CD8-positive, alpha-beta memory T cell (primary cell): ENCODE measurements at regions of chr11 and their contacts with region 1.

Region 1: DNA sequence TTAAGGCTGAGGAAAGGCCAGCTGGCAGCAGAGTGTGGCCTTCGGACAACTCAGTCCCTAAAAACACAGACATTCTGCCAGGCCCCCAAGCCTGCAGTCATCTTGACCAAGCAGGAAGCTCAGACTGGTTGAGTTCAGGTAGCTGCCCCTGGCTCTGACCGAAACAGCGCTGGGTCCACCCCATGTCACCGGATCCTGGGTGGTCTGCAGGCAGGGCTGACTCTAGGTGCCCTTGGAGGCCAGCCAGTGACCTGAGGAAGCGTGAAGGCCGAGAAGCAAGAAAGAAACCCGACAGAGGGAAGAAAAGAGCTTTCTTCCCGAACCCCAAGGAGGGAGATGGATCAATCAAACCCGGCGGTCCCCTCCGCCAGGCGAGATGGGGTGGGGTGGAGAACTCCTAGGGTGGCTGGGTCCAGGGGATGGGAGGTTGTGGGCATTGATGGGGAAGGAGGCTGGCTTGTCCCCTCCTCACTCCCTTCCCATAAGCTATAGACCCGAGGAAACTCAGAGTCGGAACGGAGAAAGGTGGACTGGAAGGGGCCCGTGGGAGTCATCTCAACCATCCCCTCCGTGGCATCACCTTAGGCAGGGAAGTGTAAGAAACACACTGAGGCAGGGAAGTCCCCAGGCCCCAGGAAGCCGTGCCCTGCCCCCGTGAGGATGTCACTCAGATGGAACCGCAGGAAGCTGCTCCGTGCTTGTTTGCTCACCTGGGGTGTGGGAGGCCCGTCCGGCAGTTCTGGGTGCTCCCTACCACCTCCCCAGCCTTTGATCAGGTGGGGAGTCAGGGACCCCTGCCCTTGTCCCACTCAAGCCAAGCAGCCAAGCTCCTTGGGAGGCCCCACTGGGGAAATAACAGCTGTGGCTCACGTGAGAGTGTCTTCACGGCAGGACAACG is 11.7 kb downstream of the CXCR5 start:
- DNase-seq: peak; percentile 55 to 86 (median 75)
- H3K4me3 ChIP-seq: peak overlapping the region; percentile 53
- H3K4me3 Mint-ChIP-seq: peak overlapping the region; percentile 40 to 83 (median 75)
- H3K27ac ChIP-seq: peak overlapping the region; percentile 54
- H3K27ac Mint-ChIP-seq: peak overlapping the region; percentile 84 to 97 (median 90)
- H3K4me1 ChIP-seq: peaks cover 73% of the 10 kb centered on the region
- H3K4me1 Mint-ChIP-seq: peaks cover 64 to 85% (median 72%) of the 10 kb centered on the region in 3 donors
- H3K27me3 ChIP-seq: no peaks in the 10 kb centered on the region
- H3K27me3 Mint-ChIP-seq: peaks cover 0 to 5% of the 10 kb centered on the region in 2 donors

Region 2: GRCh38 chr11:118785362-118785761 is 110.0 kb before region 1 on chr11:
- CTCF ChIA-PET with region 1: interaction called, 42 read pairs
- POLR2A ChIA-PET with region 1: interaction called, 59 read pairs
- DNase-seq: no peak
- H3K4me3 ChIP-seq: peak overlapping the region; percentile 46
- H3K4me3 Mint-ChIP-seq: peak overlapping the region; percentile 51 to 100 (median 79)
- H3K27ac ChIP-seq: no peak overlapping the region
- H3K27ac Mint-ChIP-seq: peak overlapping the region in 7 of 8 donors; percentile 3 to 99 (median 73)
- H3K4me1 ChIP-seq: peaks cover 70% of the 10 kb centered on the region
- H3K4me1 Mint-ChIP-seq: peaks cover 53 to 75% (median 65%) of the 10 kb centered on the region in 3 donors
- H3K27me3 ChIP-seq: no peaks in the 10 kb centered on the region
- H3K27me3 Mint-ChIP-seq: no peaks in the 10 kb centered on the region

Region 3: GRCh38 chr11:118870396-118871345 is 24.7 kb before region 1 on chr11:
- CTCF ChIA-PET with region 1: interaction called, 16 read pairs
- POLR2A ChIA-PET with region 1: interaction called, 21 read pairs
- DNase-seq: peak in 1 of 5 donors; percentile 58
- H3K4me3 ChIP-seq: peak overlapping the region; percentile 35
- H3K4me3 Mint-ChIP-seq: peak overlapping the region; percentile 72 to 92 (median 83)
- H3K27ac ChIP-seq: peak overlapping the region; percentile 87
- H3K27ac Mint-ChIP-seq: peak overlapping the region; percentile 98 to 100 (median 99)
- H3K4me1 ChIP-seq: peaks cover 62% of the 10 kb centered on the region
- H3K4me1 Mint-ChIP-seq: peaks cover 47 to 69% (median 56%) of the 10 kb centered on the region in 3 donors
- H3K27me3 ChIP-seq: no peaks in the 10 kb centered on the region
- H3K27me3 Mint-ChIP-seq: no peaks in the 10 kb centered on the region

Region 4: DNA sequence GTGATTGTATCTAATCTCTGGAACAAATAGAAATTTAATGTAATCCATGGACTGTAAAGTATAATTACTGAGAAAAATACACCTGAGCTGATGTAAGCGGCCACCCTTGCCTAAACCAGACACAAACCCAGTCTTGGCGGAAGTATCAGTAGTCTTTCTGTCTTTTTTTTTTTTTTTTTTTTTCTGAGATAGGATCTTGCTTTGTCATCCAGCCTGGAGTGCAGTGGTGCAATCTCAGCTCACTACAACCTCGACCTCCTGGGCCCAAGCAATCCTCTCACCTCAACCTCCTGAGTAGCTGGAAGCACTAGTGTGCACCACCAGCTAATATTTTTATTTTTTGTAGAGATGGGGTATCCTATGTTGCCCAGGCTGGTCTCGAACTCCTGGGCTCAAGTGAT is 17.2 kb before region 1 on chr11:
- CTCF ChIA-PET with region 1: interaction called, 27 read pairs
- POLR2A ChIA-PET with region 1: interaction called, 16 read pairs
- DNase-seq: peak in 1 of 5 donors; percentile 58
- H3K4me3 ChIP-seq: peak overlapping the region; percentile 11
- H3K4me3 Mint-ChIP-seq: peak overlapping the region in 3 of 7 donors; percentile 2 to 25 (median 24)
- H3K27ac ChIP-seq: no peak overlapping the region
- H3K27ac Mint-ChIP-seq: peak overlapping the region; percentile 77 to 99 (median 98)
- H3K4me1 ChIP-seq: peaks cover 89% of the 10 kb centered on the region
- H3K4me1 Mint-ChIP-seq: peaks cover 76 to 92% (median 90%) of the 10 kb centered on the region in 3 donors
- H3K27me3 ChIP-seq: no peaks in the 10 kb centered on the region
- H3K27me3 Mint-ChIP-seq: no peaks in the 10 kb centered on the region

Region 5: DNA sequence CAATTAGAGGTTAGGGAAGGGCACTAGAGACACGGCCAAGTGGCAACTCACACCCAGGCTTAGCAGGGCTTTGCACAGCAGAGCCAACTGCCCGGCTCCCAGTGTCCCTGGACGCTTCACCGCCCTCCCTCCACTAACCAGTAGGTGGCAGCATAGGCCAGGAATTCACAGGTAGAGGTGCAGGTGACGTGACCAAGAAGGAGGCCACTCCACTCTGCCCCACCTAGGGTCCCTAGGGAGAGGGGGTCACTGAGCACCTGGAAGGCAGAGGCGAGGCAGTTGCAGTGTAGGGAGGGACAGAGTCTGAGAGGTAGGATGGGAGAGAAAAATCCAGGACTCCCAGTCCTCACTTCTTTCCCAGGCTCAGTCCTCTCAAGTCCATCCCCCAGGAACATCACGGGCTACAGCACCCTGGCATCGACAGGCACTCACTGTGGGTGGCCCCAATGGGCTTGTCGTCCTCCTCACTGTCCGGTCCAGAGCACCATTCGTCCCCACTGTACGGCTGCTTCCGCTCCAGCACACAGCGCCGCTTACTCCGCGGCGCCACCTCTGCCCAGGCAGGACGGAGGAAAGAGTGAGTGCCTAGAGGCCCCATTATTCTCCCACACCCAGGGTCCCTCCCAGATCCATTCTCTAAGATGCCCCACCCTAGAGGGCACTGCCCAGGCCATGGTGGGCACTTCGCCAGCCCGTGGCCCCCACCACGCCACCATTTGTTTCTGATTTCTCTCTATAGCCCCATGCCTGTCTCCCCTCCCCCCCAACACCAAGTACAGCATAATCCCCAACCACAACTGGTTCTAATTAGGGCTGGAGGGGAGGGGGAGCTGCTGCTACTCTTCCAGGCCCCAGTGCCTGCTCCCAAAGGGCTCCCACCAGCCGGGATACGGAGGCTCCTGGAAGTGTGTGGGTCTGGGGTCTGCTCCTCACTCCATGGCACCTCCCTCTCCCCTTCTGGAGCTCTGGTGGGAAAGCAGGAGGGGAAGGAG is 12.0 kb after region 1 on chr11:
- CTCF ChIA-PET with region 1: interaction called, 21 read pairs
- POLR2A ChIA-PET with region 1: interaction called, 4 read pairs
- DNase-seq: peak; percentile 74 to 88 (median 82)
- H3K4me3 ChIP-seq: no peak overlapping the region
- H3K4me3 Mint-ChIP-seq: peak overlapping the region in 5 of 7 donors; percentile 21 to 65 (median 34)
- H3K27ac ChIP-seq: no peak overlapping the region
- H3K27ac Mint-ChIP-seq: peak overlapping the region; percentile 81 to 100 (median 96)
- H3K4me1 ChIP-seq: peaks cover 57% of the 10 kb centered on the region
- H3K4me1 Mint-ChIP-seq: peaks cover 42 to 57% (median 47%) of the 10 kb centered on the region in 3 donors
- H3K27me3 ChIP-seq: no peaks in the 10 kb centered on the region
- H3K27me3 Mint-ChIP-seq: no peaks in the 10 kb centered on the region

Region 6: GRCh38 chr11:118928108-118928870 is 32.9 kb after region 1 on chr11:
- CTCF ChIA-PET with region 1: interaction called, 20 read pairs
- POLR2A ChIA-PET with region 1: interaction called, 11 read pairs
- DNase-seq: peak; percentile 90 to 98 (median 96)
- H3K4me3 ChIP-seq: peak overlapping the region; percentile 70
- H3K4me3 Mint-ChIP-seq: peak overlapping the region; percentile 83 to 100 (median 98)
- H3K27ac ChIP-seq: peak overlapping the region; percentile 96
- H3K27ac Mint-ChIP-seq: peak overlapping the region; percentile 92 to 100 (median 99)
- H3K4me1 ChIP-seq: peaks cover 31% of the 10 kb centered on the region
- H3K4me1 Mint-ChIP-seq: peaks cover 39 to 51% (median 41%) of the 10 kb centered on the region in 3 donors
- H3K27me3 ChIP-seq: no peaks in the 10 kb centered on the region
- H3K27me3 Mint-ChIP-seq: peaks cover 0 to 14% of the 10 kb centered on the region in 2 donors

Region 7: DNA sequence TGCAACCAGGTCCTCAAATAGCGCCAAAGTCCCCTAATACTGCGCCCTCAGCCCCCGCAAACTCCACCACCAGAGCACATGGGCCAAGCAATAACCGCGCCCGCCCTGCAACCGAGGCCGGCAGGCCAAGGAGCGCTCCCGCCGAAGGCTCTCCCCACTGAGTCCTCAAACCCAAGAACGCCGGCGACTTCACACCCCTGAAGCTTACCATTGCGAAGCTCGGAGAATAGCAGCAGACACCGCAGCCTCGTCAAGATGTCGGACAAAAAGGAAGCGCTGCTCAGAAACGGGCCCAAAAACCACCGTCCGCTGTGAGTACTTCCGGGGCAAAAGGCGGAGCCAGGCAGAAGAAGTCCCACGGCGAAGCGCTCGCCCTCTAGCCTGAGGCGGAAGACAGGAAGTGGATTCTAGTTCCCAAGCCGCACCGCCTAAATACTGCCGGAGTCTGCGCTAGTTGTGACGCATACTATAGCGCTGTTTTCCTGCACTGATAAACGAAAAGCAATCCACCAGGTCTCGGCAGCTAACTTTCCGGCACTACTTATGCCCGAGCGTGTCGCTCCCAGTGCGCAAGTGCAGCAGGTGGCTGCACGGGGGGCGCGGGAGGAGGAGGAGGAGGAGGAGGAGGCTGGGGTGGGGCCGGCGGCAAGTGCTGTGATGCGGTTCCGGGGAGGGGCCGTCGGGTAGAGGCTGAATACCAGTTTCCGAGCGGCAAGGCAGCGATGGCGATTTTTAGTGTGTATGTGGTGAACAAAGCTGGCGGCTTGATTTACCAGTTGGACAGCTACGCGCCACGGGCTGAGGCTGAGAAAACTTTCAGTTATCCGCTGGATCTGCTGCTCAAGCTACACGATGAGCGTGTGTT is 122.9 kb after region 1 on chr11 and contains the starts of genes RPS25 and TRAPPC4:
- CTCF ChIA-PET with region 1: no interaction called
- POLR2A ChIA-PET with region 1: interaction called, 12 read pairs
- DNase-seq: peak; percentile 91 to 97 (median 96)
- H3K4me3 ChIP-seq: peak within 1 kb of the TSS; percentile 83
- H3K4me3 Mint-ChIP-seq: peak within 1 kb of the TSS; percentile 97 to 100 (median 99)
- H3K27ac ChIP-seq: peak within 1 kb of the TSS; percentile 94
- H3K27ac Mint-ChIP-seq: peak within 1 kb of the TSS; percentile 97 to 100 (median 100)
- H3K4me1 ChIP-seq: peaks cover 41% of the 10 kb centered on the region
- H3K4me1 Mint-ChIP-seq: peaks cover 38 to 74% (median 54%) of the 10 kb centered on the region in 3 donors
- H3K27me3 ChIP-seq: no peaks in the 10 kb centered on the region
- H3K27me3 Mint-ChIP-seq: peaks cover 0 to 2% of the 10 kb centered on the region in 2 donors
- total RNA-seq, gene RPS25: 1,415 to 1,447 TPM
- total RNA-seq, gene TRAPPC4: 154 TPM

Region 8: GRCh38 chr11:119031912-119032280 is 136.5 kb after region 1 on chr11:
- CTCF ChIA-PET with region 1: no interaction called
- POLR2A ChIA-PET with region 1: no interaction called
- DNase-seq: no peak
- H3K4me3 ChIP-seq: no peak overlapping the region
- H3K4me3 Mint-ChIP-seq: peak overlapping the region in 1 of 7 donors; percentile 36
- H3K27ac ChIP-seq: no peak overlapping the region
- H3K27ac Mint-ChIP-seq: peak overlapping the region in 1 of 8 donors; percentile 89
- H3K4me1 ChIP-seq: peaks cover 12% of the 10 kb centered on the region
- H3K4me1 Mint-ChIP-seq: peaks cover 9 to 24% (median 18%) of the 10 kb centered on the region in 3 donors
- H3K27me3 ChIP-seq: no peaks in the 10 kb centered on the region
- H3K27me3 Mint-ChIP-seq: no peaks in the 10 kb centered on the region